Activated T-helper 1 cell treated with anti-CD3 and anti-CD28 coated beads, Interleukin-12 subunit alpha, Interleukin-12 subunit beta, Interleukin-2, Interleukin-4 antibody, amounts not matched to agents 30 ng/mL and 10 ng/mL and 1 ng/mL, durations not matched to agents 14 hours and 24 hours and 36 hours (primary cell): ENCODE measurements at regions of chr1 and their contacts with region 1.

Region 1: DNA sequence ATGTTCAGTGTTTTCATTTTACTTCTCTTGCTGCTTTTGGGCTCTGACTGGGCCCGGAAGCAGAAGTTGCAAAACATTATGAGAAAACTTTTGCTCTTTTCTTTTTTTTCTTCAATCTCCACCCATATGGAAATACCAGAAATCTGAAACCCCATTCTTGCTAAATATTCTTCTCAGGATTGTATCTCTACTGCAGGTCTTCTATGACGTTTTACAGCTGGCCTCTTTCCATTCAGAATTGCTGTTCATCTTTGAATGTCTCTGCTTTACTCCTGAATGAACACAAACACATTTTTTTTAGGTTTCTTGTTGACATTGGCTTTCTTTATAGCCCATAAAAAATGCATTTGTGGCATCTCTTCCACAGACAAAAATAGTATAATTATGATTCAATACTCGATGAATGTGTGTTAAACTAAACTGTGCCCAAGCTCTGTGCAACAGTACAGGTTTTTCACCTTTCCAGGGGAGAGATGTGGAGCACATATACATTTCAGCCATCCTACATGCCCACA is 18.8 kb downstream of the PTPRC start:
- DNase-seq: no peak
- H3K4me3 Mint-ChIP-seq: peak overlapping the region; percentile 63
- H3K27ac Mint-ChIP-seq: peak overlapping the region; percentile 84
- H3K4me1 Mint-ChIP-seq: peaks cover 68% of the 10 kb centered on the region
- H3K27me3 Mint-ChIP-seq: no peaks in the 10 kb centered on the region

Region 2: GRCh38 chr1:197890936-197891335 is 766.7 kb before region 1 on chr1:
- intact Hi-C with region 1: no loop called
- DNase-seq: no peak
- H3K4me3 Mint-ChIP-seq: no peak overlapping the region
- H3K27ac Mint-ChIP-seq: no peak overlapping the region
- H3K4me1 Mint-ChIP-seq: no peaks in the 10 kb centered on the region
- H3K27me3 Mint-ChIP-seq: peaks cover 37% of the 10 kb centered on the region

Region 3: DNA sequence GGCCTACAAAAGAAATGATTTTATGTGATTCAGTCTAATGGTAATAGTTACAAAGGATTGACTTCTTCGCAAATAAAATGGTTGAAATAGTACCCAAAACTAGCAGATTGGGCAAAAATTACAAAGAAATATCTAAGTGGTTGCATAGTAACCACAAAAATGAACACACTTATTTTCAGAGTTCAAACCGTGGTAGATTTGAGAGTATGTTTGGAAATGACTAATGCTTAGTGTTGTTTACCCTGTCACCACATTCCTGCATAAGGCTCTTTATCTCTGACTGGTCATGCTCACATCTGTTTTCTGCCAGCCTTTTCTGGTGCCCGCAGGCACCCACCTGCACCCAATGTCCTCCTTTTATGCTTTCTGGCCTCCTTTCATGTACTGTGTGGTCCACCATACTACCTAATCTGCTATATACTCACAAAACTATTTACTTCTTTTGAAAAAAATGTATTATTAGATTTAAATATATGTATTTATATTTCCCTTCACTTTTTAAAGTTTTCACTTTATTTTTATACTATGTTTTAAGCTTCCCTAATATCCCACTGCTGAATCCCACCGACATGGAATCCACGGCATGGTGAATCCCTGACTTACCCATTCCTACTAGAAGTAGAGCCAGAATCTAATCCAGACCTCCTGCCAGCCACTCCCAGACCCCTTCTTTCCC is 11.6 kb after region 1 on chr1:
- intact Hi-C with region 1: loop called (anchors 1 kb)
- DNase-seq: no peak
- H3K4me3 Mint-ChIP-seq: peak overlapping the region; percentile 63
- H3K27ac Mint-ChIP-seq: peak overlapping the region; percentile 93
- H3K4me1 Mint-ChIP-seq: peaks cover 92% of the 10 kb centered on the region
- H3K27me3 Mint-ChIP-seq: no peaks in the 10 kb centered on the region

Region 4: DNA sequence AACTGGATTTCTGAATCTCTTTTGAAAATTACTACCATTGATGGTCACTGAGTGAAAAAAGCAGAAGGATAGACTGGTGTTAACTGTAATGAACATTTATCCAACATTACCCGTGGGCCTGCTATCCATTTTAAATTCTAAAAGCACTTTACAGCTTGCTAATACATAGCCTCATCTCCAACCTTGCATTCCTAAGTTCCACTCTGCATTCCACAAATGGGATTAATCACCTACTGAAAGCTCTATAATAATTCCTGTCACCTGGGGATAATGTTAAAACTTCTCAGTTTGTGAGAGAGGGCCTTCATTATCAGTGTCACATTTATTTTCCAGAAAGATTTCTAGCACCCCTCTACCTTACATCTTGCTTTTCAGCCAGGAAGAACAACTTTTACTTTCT is 19.4 kb after region 1 on chr1:
- intact Hi-C with region 1: loop called (anchors 1 kb)
- DNase-seq: no peak
- H3K4me3 Mint-ChIP-seq: peak overlapping the region; percentile 83
- H3K27ac Mint-ChIP-seq: peak overlapping the region; percentile 96
- H3K4me1 Mint-ChIP-seq: peaks cover 85% of the 10 kb centered on the region
- H3K27me3 Mint-ChIP-seq: no peaks in the 10 kb centered on the region

Region 5: GRCh38 chr1:198922638-198923430 is 265.2 kb after region 1 on chr1:
- intact Hi-C with region 1: loop called (anchors 5 kb)
- DNase-seq: no peak
- H3K4me3 Mint-ChIP-seq: peak overlapping the region; percentile 78
- H3K27ac Mint-ChIP-seq: peak overlapping the region; percentile 90
- H3K4me1 Mint-ChIP-seq: peaks cover 90% of the 10 kb centered on the region
- H3K27me3 Mint-ChIP-seq: no peaks in the 10 kb centered on the region